ENCODE measurements at regions of chr11 and their contacts with region 1.

Region 1: DNA sequence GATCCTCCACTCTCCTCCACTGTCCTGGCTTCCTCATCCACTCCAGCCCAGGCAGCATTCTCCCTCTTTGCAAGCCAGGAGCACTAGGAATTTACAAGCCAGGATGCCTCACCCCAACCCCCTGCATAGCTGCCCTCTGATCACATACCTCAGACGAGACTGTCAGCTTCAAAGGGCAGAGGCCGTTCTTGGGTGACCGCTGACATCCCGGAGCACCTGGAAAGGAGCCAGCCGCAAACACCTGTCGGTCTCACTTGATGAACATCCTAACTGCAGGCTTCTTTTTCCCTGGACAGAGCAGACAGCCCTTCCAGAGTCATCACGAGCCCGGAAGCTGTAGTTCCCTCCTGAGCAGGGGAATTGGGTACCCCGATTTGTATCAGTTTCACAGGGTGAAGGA is 451.3 kb upstream of the B3GAT1 start:
- DNase-seq: no peak
- H3K4me3 ChIP-seq: no peak overlapping the region
- H3K27ac ChIP-seq: no peak overlapping the region
- H3K4me1 ChIP-seq: peaks cover 0 to 12% of the 10 kb centered on the region in 2 experiments; a peak in 2 of 4 replicates
- H3K27me3 ChIP-seq: no peaks in the 10 kb centered on the region
- CTCF ChIP-seq: no peak
- EP300 ChIP-seq: no peak
- RAD21 ChIP-seq: no peak

Region 2: GRCh38 chr11:134701564-134702165 is 161.6 kb before region 1 on chr11:
- CTCF ChIA-PET with region 1: no interaction called
- POLR2A ChIA-PET with region 1: no interaction called
- DNase-seq: no peak
- H3K4me3 ChIP-seq: no peak overlapping the region
- H3K27ac ChIP-seq: no peak overlapping the region
- H3K4me1 ChIP-seq: no peaks in the 10 kb centered on the region
- H3K27me3 ChIP-seq: no peaks in the 10 kb centered on the region
- CTCF ChIP-seq: no peak
- EP300 ChIP-seq: no peak
- RAD21 ChIP-seq: no peak

Region 3: GRCh38 chr11:134786636-134787035 is 76.7 kb before region 1 on chr11:
- CTCF ChIA-PET with region 1: no interaction called
- POLR2A ChIA-PET with region 1: no interaction called
- DNase-seq: no peak
- H3K4me3 ChIP-seq: no peak overlapping the region
- H3K27ac ChIP-seq: no peak overlapping the region
- H3K4me1 ChIP-seq: peaks cover 0 to 1% of the 10 kb centered on the region in 2 experiments; a peak in 1 of 4 replicates
- H3K27me3 ChIP-seq: no peaks in the 10 kb centered on the region
- CTCF ChIP-seq: no peak
- EP300 ChIP-seq: no peak
- RAD21 ChIP-seq: no peak

Region 4: GRCh38 chr11:134821422-134821821 is 41.9 kb before region 1 on chr11:
- CTCF ChIA-PET with region 1: interaction called, 10 read pairs
- POLR2A ChIA-PET with region 1: no interaction called
- DNase-seq: no peak
- H3K4me3 ChIP-seq: no peak overlapping the region
- H3K27ac ChIP-seq: no peak overlapping the region
- H3K4me1 ChIP-seq: peaks cover 0 to 5% of the 10 kb centered on the region in 2 experiments; a peak in 1 of 4 replicates
- H3K27me3 ChIP-seq: no peaks in the 10 kb centered on the region
- CTCF ChIP-seq: no peak
- EP300 ChIP-seq: no peak
- RAD21 ChIP-seq: no peak

Region 5: DNA sequence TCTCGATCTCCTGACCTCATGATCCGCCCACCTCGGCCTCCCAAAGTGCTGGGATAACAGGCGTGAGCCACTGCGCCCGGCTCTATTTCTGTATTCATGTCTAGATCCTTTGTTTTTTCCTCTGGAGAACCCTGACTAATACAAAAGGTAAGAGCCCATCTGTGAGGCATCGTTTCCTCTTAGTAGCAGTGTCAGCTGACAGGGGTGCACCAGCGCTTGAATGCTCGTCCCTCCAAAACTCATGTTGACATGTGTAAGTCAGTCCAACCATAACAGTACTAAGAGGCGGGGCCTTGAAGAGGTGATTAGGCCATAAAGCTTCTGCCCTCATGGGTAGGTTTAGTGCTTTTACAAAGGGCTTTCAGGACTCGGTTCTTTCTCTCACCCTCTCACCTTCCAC is 18.8 kb after region 1 on chr11:
- CTCF ChIA-PET with region 1: interaction called, 11 read pairs
- POLR2A ChIA-PET with region 1: no interaction called
- DNase-seq: no peak
- H3K4me3 ChIP-seq: no peak overlapping the region
- H3K27ac ChIP-seq: no peak overlapping the region
- H3K4me1 ChIP-seq: peaks cover 0 to 2% of the 10 kb centered on the region in 2 experiments; a peak in 1 of 4 replicates
- H3K27me3 ChIP-seq: no peaks in the 10 kb centered on the region
- CTCF ChIP-seq: no peak
- EP300 ChIP-seq: no peak
- RAD21 ChIP-seq: no peak

Region 6: GRCh38 chr11:134939905-134940304 is 76.6 kb after region 1 on chr11:
- CTCF ChIA-PET with region 1: interaction called, 16 read pairs
- POLR2A ChIA-PET with region 1: no interaction called
- DNase-seq: peak; percentile 75
- H3K4me3 ChIP-seq: no peak overlapping the region
- H3K27ac ChIP-seq: no peak overlapping the region; a peak in 1 of 4 replicates
- H3K4me1 ChIP-seq: peaks cover 0 to 23% of the 10 kb centered on the region in 2 experiments; a peak in 1 of 4 replicates
- H3K27me3 ChIP-seq: no peaks in the 10 kb centered on the region
- CTCF ChIP-seq: no peak; the same call in 1 of the 2 replicates
- EP300 ChIP-seq: no peak
- RAD21 ChIP-seq: peak; percentile 48

Region 7: DNA sequence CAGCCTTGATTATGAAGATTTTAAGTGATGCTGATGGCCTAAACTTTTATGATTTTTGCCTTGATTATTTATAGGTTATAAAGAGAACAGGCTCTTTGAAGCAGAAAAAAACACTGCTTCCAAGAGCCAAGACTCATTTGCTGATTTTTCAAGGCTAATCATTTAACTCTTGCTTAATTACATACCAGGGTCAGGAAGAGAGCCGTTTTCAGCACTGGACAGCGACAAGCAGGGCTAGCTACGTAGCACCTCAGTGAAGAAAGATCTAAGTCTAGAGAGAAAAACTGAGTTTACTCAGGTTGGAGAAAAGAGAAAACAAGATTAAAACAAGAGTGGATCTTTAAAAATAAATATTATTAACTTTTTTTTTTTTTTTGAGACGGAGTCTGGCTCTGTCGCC is 164.2 kb after region 1 on chr11:
- CTCF ChIA-PET with region 1: interaction called, 38 read pairs
- POLR2A ChIA-PET with region 1: no interaction called
- DNase-seq: no peak
- H3K4me3 ChIP-seq: no peak overlapping the region
- H3K27ac ChIP-seq: no peak overlapping the region
- H3K4me1 ChIP-seq: peaks cover 0 to 15% of the 10 kb centered on the region in 2 experiments; a peak in 1 of 4 replicates
- H3K27me3 ChIP-seq: no peaks in the 10 kb centered on the region
- CTCF ChIP-seq: no peak
- EP300 ChIP-seq: no peak
- RAD21 ChIP-seq: no peak

Region 8: DNA sequence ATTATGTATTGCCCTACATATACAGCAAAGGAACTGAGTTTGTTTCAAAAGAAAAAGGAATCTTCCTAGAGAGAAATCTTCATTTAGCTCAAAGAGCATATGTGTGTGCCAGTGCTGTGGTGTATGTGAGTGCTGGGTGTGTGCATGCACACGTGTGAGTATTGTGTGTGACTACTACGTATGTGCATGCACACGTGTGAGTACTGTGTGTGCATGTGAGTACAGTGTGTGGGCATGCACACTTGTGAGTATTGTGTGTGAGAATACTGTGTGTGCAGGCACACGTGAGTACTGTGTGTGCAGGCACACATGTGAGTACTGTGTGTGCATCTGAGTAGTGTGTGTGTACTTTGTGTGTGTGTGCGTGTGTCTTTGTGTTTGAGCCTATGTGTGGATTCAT is 199.7 kb after region 1 on chr11:
- CTCF ChIA-PET with region 1: interaction called, 13 read pairs
- POLR2A ChIA-PET with region 1: no interaction called
- DNase-seq: no peak
- H3K4me3 ChIP-seq: no peak overlapping the region
- H3K27ac ChIP-seq: no peak overlapping the region
- H3K4me1 ChIP-seq: peaks cover 0 to 2% of the 10 kb centered on the region in 2 experiments; a peak in 1 of 4 replicates
- H3K27me3 ChIP-seq: no peaks in the 10 kb centered on the region
- CTCF ChIP-seq: no peak
- EP300 ChIP-seq: no peak
- RAD21 ChIP-seq: no peak

Region 9: DNA sequence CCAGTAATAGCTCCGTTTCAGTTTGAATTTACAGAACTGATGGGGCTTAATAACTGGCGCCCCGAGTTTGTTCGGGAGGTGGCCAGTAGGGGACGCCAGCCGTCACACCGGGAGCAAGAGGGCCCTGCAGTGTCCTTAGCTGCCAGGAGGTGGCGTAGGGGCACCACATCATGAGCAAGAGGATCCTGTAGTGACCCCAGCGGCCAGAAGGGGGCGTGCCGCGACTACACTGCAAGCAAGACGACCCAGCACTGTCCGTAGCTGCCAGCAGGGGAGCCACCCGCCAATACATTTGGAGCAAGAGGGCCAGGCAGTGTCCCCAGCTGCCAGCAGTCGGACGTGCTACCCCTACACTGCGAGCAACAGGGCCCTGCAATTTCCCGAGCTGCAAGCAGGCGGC is 212.4 kb after region 1 on chr11:
- CTCF ChIA-PET with region 1: interaction called, 20 read pairs
- POLR2A ChIA-PET with region 1: no interaction called
- DNase-seq: no peak
- H3K4me3 ChIP-seq: no peak overlapping the region; a peak in 1 of 4 replicates
- H3K27ac ChIP-seq: no peak overlapping the region
- H3K4me1 ChIP-seq: peaks cover 0 to 10% of the 10 kb centered on the region in 2 experiments; a peak in 1 of 4 replicates
- H3K27me3 ChIP-seq: no peaks in the 10 kb centered on the region
- CTCF ChIP-seq: peak; percentile 61
- EP300 ChIP-seq: no peak
- RAD21 ChIP-seq: no peak

Measured in SK-N-SH (cell line).